AG04449 (cell line): ENCODE measurements at regions of chr7 and their contacts with region 1.

Region 1: DNA sequence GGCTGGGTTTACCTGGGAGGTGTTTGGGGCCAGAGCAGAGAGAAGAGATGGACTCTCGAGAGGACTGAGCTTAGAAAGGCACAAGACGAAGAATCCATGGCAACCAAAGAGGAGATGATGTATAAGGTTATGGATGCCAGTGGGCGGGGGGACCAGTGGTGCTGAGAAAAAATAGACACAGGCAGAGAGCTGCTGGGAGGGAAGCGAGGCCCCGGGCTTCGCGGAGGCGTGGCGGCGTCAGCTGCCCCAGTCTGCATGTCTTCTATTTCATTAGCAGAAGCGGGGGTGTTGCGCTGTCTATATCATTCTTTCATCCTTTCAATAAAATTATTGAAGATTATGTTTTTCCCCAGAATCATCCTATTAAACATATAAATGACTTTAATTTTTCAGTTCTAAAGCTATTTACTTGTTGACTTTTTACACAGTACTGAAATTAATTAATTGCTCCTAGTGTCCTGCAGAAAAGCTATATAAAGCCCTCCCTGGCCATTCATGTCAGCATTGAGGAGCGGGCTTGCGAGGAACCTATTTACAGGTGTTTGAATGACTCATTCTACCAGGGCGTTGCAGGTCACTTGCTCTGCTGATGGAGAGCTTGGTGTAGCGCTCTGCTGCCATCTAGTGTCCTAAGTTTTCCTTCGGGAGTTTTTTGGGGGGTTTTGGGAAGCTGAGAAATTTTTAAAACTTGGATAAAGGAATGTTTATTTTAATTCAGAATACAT is 42.9 kb upstream of the BHLHA15 start:
- DNase-seq: no peak
- H3K4me3 ChIP-seq: no peak overlapping the region
- CTCF ChIP-seq: peak; percentile 71

Region 2: DNA sequence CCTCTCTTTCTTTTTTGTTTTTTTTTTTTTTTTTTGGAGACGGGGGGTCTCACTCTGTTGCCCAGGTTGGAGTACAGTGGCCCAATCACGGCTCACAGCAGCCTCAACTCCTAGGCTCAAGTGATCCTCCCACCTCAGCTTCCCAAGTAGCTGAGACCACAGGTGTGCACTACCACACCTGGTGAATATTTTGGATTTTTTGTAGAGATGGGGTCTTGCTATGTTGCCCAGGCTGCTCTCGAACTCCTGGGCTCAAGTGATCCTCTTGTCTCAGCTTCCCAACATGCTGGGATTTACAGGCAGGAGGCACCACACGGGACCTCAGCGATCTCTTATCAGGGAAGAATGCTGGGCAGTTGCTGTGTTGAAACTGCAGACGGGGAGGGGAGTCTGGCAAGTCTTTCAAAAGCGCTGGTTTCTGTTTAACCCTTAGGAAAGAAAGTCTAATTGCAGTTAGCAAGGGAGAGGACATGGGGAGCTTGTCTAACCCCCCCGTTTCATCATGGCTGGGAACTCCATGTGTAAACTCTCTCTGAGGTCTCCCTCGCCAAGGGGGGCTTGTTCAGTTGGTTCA is 101.3 kb before region 1 on chr7:
- CTCF ChIA-PET with region 1: no interaction called
- POLR2A ChIA-PET with region 1: no interaction called
- DNase-seq: no peak
- H3K4me3 ChIP-seq: no peak overlapping the region
- CTCF ChIP-seq: no peak

Region 3: GRCh38 chr7:98097042-98097645 is 71.2 kb before region 1 on chr7:
- CTCF ChIA-PET with region 1: interaction called, 16 read pairs
- POLR2A ChIA-PET with region 1: no interaction called
- DNase-seq: no peak
- H3K4me3 ChIP-seq: no peak overlapping the region
- CTCF ChIP-seq: no peak

Region 4: GRCh38 chr7:98119256-98119918 is 49.0 kb before region 1 on chr7:
- CTCF ChIA-PET with region 1: interaction called, 129 read pairs
- POLR2A ChIA-PET with region 1: no interaction called
- DNase-seq: peak; percentile 37
- H3K4me3 ChIP-seq: no peak overlapping the region
- CTCF ChIP-seq: no peak

Region 5: GRCh38 chr7:98142658-98143057 is 25.7 kb before region 1 on chr7:
- CTCF ChIA-PET with region 1: interaction called, 18 read pairs
- POLR2A ChIA-PET with region 1: no interaction called
- DNase-seq: no peak
- H3K4me3 ChIP-seq: no peak overlapping the region
- CTCF ChIP-seq: no peak

Region 6: GRCh38 chr7:98157761-98158160 is 10.6 kb before region 1 on chr7:
- CTCF ChIA-PET with region 1: interaction called, 62 read pairs
- POLR2A ChIA-PET with region 1: no interaction called
- DNase-seq: no peak
- H3K4me3 ChIP-seq: no peak overlapping the region
- CTCF ChIP-seq: no peak

Region 7: GRCh38 chr7:98186452-98187137 is 18.3 kb after region 1 on chr7:
- CTCF ChIA-PET with region 1: interaction called, 103 read pairs
- POLR2A ChIA-PET with region 1: no interaction called
- DNase-seq: no peak
- H3K4me3 ChIP-seq: no peak overlapping the region
- CTCF ChIP-seq: no peak